A549 (cell line): ENCODE measurements at regions of chr15 and their contacts with region 1.

Region 1: DNA sequence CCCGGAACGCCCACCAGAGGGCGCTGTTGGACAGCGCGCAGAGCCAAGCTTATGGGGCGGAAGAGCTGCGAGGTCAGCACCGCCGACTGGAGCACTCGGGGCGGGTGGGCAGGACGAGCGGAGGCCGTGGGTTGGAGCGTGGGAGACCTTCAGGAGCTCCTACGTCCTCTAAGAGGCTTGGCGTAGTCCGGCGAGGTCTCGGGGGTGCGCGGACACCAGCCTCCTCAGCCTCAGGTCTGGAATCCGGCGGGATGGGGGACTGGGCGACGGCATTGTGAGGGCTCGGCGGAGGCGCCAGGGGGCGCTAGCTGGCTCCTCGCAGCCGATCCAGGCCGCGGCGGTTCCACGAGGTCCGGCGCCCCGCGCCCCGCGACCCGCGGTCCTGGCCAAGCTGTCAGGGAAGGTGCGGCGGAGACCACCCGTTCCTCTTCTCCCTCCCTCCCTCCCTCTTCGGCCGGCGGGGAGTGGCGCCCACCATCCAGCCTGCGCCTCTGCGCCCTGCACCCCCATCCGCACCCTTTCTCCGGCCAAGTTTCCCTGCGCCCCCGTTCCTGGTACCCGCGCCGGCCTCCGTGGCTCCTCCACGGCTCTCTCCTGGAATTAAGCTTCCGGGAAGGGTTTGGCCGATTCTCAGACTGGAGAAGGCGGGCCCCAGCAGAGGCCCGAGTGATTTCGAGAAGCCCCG is 24.3 kb upstream of the POLG start:
- DNase-seq: peak; percentile 86 to 94
- ATAC-seq: peak; percentile 63 to 83
- H3K4me3 ChIP-seq: peak overlapping the region; percentile 35
- H3K27ac ChIP-seq: peak overlapping the region; percentile 31 to 80; a peak in 5 of 6 replicates
- H3K4me1 ChIP-seq: peaks cover 28% of the 10 kb centered on the region
- CTCF ChIP-seq: peak; percentile 100
- EP300 ChIP-seq: no peak
- POLR2A ChIP-seq: no peak
- RAD21 ChIP-seq: peak; percentile 93 to 99

Region 2: DNA sequence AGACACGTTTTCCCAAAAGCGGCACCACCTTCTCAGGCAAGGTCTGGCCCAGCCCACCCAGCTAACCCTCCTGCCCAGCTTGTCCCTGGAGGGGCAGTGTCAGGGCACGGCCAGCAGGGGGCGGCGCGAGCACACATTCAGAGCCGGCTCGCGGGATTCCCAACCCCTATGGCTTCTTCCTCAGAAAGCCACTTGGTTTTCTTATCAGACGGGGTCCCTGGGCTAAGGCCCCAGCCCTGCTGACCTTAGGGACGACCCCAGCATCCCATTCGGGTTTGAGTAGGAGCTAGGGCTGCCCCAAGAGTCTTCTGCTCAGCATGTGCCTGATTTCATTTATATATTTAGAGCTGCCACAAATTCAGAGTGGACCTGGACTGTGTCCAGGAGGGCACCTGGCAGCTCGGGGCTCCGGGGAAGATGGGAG is 152.0 kb before region 1 on chr15:
- CTCF ChIA-PET with region 1: interaction called, 30 read pairs
- POLR2A ChIA-PET with region 1: no interaction called
- DNase-seq: peak; percentile 82 to 99
- ATAC-seq: peak; percentile 98 to 99
- H3K4me3 ChIP-seq: peak overlapping the region; percentile 36
- H3K27ac ChIP-seq: peak overlapping the region; percentile 23 to 65; a peak in 4 of 6 replicates
- H3K4me1 ChIP-seq: no peaks in the 10 kb centered on the region
- CTCF ChIP-seq: peak; percentile 97
- EP300 ChIP-seq: no peak
- POLR2A ChIP-seq: no peak
- RAD21 ChIP-seq: peak; percentile 93 to 94

Region 3: DNA sequence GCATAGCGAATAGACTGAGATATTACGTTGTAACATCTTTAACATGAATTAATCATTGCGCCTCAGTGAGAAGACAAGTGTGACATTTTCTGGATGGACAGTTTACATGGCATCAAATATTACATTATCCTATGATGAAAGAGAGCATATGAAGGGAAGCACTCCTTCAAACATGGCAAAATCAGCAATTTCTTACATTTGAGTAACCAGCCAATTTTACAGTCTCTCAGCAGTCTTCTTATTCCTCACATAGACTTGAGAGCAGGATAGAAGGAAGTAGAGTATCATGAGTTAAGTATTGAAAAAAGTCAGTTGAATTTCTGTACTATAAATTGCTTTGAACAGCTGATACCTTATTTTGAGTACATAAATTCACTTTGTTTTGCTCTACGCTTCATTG is 76.3 kb before region 1 on chr15:
- CTCF ChIA-PET with region 1: no interaction called
- POLR2A ChIA-PET with region 1: no interaction called
- DNase-seq: no peak
- ATAC-seq: no peak
- H3K4me3 ChIP-seq: no peak overlapping the region
- H3K27ac ChIP-seq: no peak overlapping the region
- H3K4me1 ChIP-seq: no peaks in the 10 kb centered on the region
- CTCF ChIP-seq: no peak
- EP300 ChIP-seq: no peak
- POLR2A ChIP-seq: no peak
- RAD21 ChIP-seq: no peak

Region 4: GRCh38 chr15:89383365-89384175 is 24.7 kb after region 1 on chr15:
- CTCF ChIA-PET with region 1: interaction called, 494 read pairs
- POLR2A ChIA-PET with region 1: no interaction called
- DNase-seq: peak in 1 of 2 experiments; percentile 56
- ATAC-seq: peak in 1 of 2 experiments; percentile 21; a peak in 2 of 6 replicates
- H3K4me3 ChIP-seq: no peak overlapping the region
- H3K27ac ChIP-seq: no peak overlapping the region
- H3K4me1 ChIP-seq: peaks cover 10% of the 10 kb centered on the region; the same call in 2 of the 3 replicates
- CTCF ChIP-seq: no peak
- EP300 ChIP-seq: no peak
- POLR2A ChIP-seq: no peak
- RAD21 ChIP-seq: no peak

Region 5: GRCh38 chr15:89430530-89431341 is 71.8 kb after region 1 on chr15:
- CTCF ChIA-PET with region 1: interaction called, 369 read pairs
- POLR2A ChIA-PET with region 1: interaction called, 4 read pairs
- DNase-seq: peak; percentile 80 to 96
- ATAC-seq: peak; percentile 80 to 96
- H3K4me3 ChIP-seq: peak overlapping the region; percentile 41
- H3K27ac ChIP-seq: peak overlapping the region; percentile 69 to 81
- H3K4me1 ChIP-seq: peaks cover 27% of the 10 kb centered on the region; the same call in 2 of the 3 replicates
- CTCF ChIP-seq: peak; percentile 96
- EP300 ChIP-seq: no peak
- POLR2A ChIP-seq: 0 out of 2 replicates have a peak, but pooled peaks have one; percentile 8
- RAD21 ChIP-seq: peak; percentile 83 to 85

Region 6: GRCh38 chr15:89462331-89462912 is 103.5 kb after region 1 on chr15:
- CTCF ChIA-PET with region 1: interaction called, 79 read pairs
- POLR2A ChIA-PET with region 1: no interaction called
- DNase-seq: peak in 1 of 2 experiments; percentile 65
- ATAC-seq: peak in 1 of 2 experiments; percentile 73; a peak in 3 of 6 replicates
- H3K4me3 ChIP-seq: no peak overlapping the region
- H3K27ac ChIP-seq: no peak overlapping the region
- H3K4me1 ChIP-seq: peaks cover 11% of the 10 kb centered on the region; the same call in 2 of the 3 replicates
- CTCF ChIP-seq: no peak
- EP300 ChIP-seq: no peak
- POLR2A ChIP-seq: no peak
- RAD21 ChIP-seq: no peak

Region 7: DNA sequence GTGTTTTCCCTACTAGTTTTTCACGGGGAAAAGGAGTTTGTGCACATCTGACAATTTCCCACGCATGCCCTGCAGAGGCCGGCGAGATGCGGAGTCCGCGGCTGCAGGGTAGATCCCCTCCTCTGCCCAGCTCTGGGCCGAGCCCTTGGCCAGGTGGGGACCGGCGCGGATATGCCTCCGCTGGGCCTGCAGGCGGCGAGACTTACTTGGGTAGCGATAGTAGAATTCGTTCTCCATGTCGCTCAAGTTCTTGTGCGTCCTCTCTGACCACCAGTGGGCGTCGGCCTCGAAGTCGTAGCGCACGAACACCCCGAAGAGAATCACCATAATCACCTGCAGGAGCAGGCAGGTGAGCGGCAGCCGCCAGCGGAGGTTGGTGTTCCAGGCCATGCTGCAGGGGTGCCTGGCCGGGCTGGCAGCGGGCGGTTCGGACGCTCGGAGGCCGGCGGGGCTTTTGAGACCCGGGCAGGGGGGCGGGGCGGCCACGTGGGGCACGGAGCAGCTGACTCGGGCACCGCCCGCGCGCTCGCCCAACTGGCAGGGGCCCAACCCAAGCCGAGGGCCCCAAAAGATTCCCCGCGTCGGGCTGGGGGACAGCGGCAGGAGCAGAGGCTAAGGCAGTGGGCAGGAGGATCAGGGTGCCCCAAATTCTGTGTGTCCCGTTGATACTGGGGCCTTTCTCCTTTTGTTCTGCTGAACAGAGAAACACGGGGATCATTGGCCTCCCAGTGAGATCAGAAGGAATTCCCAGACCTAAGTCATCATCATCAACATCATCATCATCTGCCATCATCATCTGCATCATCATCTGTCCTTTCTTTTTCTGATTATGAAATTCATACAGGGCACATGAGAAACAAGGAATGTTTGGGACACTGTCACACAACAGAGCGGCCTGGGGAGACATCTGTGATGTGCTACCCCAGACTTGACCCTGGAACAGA is 137.5 kb after region 1 on chr15 and contains the start of gene RHCG:
- CTCF ChIA-PET with region 1: interaction called, 51 read pairs
- POLR2A ChIA-PET with region 1: no interaction called
- DNase-seq: peak; percentile 80 to 94
- ATAC-seq: peak; percentile 69 to 78
- H3K4me3 ChIP-seq: peak within 1 kb of the TSS; percentile 51
- H3K27ac ChIP-seq: peak within 1 kb of the TSS; percentile 80 to 88
- H3K4me1 ChIP-seq: peaks cover 44% of the 10 kb centered on the region
- CTCF ChIP-seq: peak; percentile 74
- EP300 ChIP-seq: peak; percentile 66 to 73; a peak in 2 of 5 replicates
- POLR2A ChIP-seq: peak; percentile 49
- RAD21 ChIP-seq: peak; percentile 68
- polyA plus RNA-seq, gene RHCG: 11.0 and 16.6 TPM in 2 replicates

Region 8: DNA sequence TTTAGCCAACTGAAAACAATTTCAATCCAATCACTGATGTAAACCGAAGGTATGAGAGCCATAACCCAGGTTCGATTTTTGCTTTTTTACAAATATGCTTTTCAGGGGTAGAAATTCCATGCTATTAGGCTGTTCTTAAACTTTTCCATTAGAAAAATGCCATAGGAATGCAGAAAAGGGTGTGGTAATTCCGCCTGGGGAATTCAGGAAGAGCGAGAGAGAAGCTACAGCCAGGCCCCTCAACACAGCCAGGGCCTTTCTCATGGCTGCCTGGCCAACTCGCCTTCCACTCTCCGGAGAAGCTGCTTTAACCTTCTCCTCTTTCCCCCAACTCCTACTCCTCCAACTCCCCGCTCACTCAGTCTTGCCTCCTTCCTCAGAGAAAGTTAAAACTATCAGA is 207.2 kb after region 1 on chr15:
- CTCF ChIA-PET with region 1: interaction called, 13 read pairs
- POLR2A ChIA-PET with region 1: no interaction called
- DNase-seq: peak in 1 of 2 experiments; percentile 27
- ATAC-seq: peak in 1 of 2 experiments; percentile 68; a peak in 4 of 6 replicates
- H3K4me3 ChIP-seq: no peak overlapping the region
- H3K27ac ChIP-seq: no peak overlapping the region
- H3K4me1 ChIP-seq: no peaks in the 10 kb centered on the region
- CTCF ChIP-seq: no peak
- EP300 ChIP-seq: no peak
- POLR2A ChIP-seq: no peak
- RAD21 ChIP-seq: no peak

Region 9: DNA sequence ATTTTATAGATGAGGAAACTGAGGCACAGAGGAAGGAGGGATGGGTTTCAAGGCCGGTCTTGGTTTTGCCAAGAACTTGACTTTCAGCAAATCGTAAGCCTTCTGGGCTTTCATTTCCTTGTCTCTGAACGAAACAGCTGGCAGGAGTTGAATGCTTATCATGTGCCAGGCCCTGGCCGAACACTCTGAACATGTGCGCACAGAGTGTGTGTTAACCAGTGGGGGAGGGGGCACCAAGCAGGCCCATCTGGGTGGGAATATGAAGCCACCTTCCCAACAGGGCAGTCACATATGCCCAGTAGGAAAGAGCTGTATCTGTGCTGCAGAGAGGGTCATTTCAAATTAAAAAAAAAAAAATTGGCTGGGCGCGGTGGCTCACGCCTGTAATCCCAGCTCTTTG is 671.5 kb after region 1 on chr15:
- CTCF ChIA-PET with region 1: no interaction called
- POLR2A ChIA-PET with region 1: no interaction called
- DNase-seq: no peak
- ATAC-seq: no peak
- H3K4me3 ChIP-seq: no peak overlapping the region
- H3K27ac ChIP-seq: no peak overlapping the region
- H3K4me1 ChIP-seq: peaks cover 20% of the 10 kb centered on the region
- CTCF ChIP-seq: no peak
- EP300 ChIP-seq: no peak
- POLR2A ChIP-seq: no peak
- RAD21 ChIP-seq: no peak